Naive thymus-derived CD8-positive, alpha-beta T cell (primary cell): ENCODE measurements at regions of chr11 and their contacts with region 1.

Region 1: DNA sequence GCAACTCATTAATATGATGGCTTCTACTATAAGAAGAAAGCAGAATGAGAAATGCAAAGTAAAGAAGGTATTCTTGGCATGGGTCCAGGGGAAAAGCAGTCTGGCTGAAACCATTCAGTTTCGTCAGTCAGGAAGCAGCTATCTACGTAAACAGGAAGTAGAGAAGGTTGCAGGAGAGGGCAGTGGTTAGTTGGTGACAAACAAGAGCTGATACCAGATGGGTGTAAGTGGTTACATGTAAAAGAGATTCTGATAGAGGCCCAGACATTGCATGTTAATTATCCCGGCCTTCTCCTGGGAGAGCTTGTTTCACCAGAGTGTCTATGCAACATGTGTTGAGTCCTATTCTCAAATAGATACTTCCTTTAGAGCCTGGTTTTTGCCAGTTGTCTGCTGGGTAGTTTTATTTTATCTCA is 58.4 kb upstream of the PSMA1 start:
- DNase-seq: peak; percentile 14 to 95 (median 83)
- ATAC-seq: peak; percentile 95 to 96
- H3K4me3 Mint-ChIP-seq: peak overlapping the region; percentile 18 to 76 (median 48)
- H3K27ac Mint-ChIP-seq: peak overlapping the region; percentile 86 to 98 (median 96)
- H3K4me1 Mint-ChIP-seq: peaks cover 37 to 67% (median 66%) of the 10 kb centered on the region in 4 donors
- H3K27me3 Mint-ChIP-seq: no peaks in the 10 kb centered on the region

Region 2: GRCh38 chr11:14554959-14555358 is 23.6 kb before region 1 on chr11:
- POLR2A ChIA-PET with region 1: interaction called, 21 read pairs
- DNase-seq: peak in 8 of 10 donors; percentile 24 to 90 (median 74)
- ATAC-seq: peak; percentile 88 to 95
- H3K4me3 Mint-ChIP-seq: peak overlapping the region; percentile 10 to 77 (median 58)
- H3K27ac Mint-ChIP-seq: peak overlapping the region; percentile 88 to 98 (median 96)
- H3K4me1 Mint-ChIP-seq: peaks cover 35 to 49% (median 42%) of the 10 kb centered on the region in 4 donors
- H3K27me3 Mint-ChIP-seq: no peaks in the 10 kb centered on the region

Region 3: GRCh38 chr11:14566331-14567063 is 12.1 kb before region 1 on chr11:
- POLR2A ChIA-PET with region 1: interaction called, 25 read pairs
- DNase-seq: no peak
- ATAC-seq: no peak
- H3K4me3 Mint-ChIP-seq: peak overlapping the region in 3 of 10 donors; percentile 1 to 37 (median 36)
- H3K27ac Mint-ChIP-seq: peak overlapping the region; percentile 44 to 86 (median 74)
- H3K4me1 Mint-ChIP-seq: peaks cover 30 to 70% (median 65%) of the 10 kb centered on the region in 4 donors
- H3K27me3 Mint-ChIP-seq: no peaks in the 10 kb centered on the region

Region 4: DNA sequence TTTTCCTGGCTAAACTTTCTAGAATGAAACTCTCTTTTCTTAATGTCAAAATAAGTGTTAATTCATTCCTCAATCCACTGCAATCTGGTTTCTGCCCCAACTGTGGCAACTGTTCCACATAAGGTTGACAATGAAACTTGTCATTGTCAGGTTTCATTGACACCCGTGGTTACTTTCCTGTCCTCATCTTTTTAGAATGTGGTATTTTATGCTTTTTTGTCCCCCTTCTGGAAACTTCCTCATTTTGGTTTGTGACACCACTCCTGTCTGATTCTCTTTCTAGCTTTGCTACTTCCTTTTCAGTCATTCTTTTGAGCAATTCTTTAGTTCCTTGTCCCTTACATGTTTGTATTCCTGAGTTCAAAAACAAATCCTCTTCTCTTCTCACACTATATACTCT is 57.6 kb after region 1 on chr11:
- POLR2A ChIA-PET with region 1: interaction called, 12 read pairs
- DNase-seq: no peak
- ATAC-seq: peak; percentile 18 to 47
- H3K4me3 Mint-ChIP-seq: peak overlapping the region in 9 of 10 donors; percentile 5 to 80 (median 70)
- H3K27ac Mint-ChIP-seq: peak overlapping the region; percentile 60 to 94 (median 81)
- H3K4me1 Mint-ChIP-seq: peaks cover 32 to 68% (median 65%) of the 10 kb centered on the region in 4 donors
- H3K27me3 Mint-ChIP-seq: no peaks in the 10 kb centered on the region

Region 5: GRCh38 chr11:14668731-14669301 is 90.3 kb after region 1 on chr11:
- POLR2A ChIA-PET with region 1: no interaction called
- DNase-seq: no peak
- ATAC-seq: peak; percentile 17 to 47
- H3K4me3 Mint-ChIP-seq: peak overlapping the region in 5 of 10 donors; percentile 2 to 42 (median 18)
- H3K27ac Mint-ChIP-seq: peak overlapping the region in 9 of 10 donors; percentile 5 to 80 (median 49)
- H3K4me1 Mint-ChIP-seq: peaks cover 16 to 48% (median 43%) of the 10 kb centered on the region in 4 donors
- H3K27me3 Mint-ChIP-seq: no peaks in the 10 kb centered on the region

Region 6: GRCh38 chr11:14764579-14765527 is 186.3 kb after region 1 on chr11:
- POLR2A ChIA-PET with region 1: interaction called, 14 read pairs
- DNase-seq: peak in 9 of 10 donors; percentile 34 to 94 (median 77)
- ATAC-seq: peak; percentile 77 to 79
- H3K4me3 Mint-ChIP-seq: peak overlapping the region in 4 of 10 donors; percentile 38 to 68 (median 56)
- H3K27ac Mint-ChIP-seq: peak overlapping the region in 1 of 10 donors; percentile 67
- H3K4me1 Mint-ChIP-seq: peaks cover 14 to 46% (median 31%) of the 10 kb centered on the region in 4 donors
- H3K27me3 Mint-ChIP-seq: no peaks in the 10 kb centered on the region